Activated CD4-positive, alpha-beta T cell treated with anti-CD3 and anti-CD28 coated beads, Interleukin-2, amount 10 ng/mL, durations not matched to agents 24 days and 14 days (primary cell): ENCODE measurements at regions of chr13 and their contacts with region 1.

Region 1: DNA sequence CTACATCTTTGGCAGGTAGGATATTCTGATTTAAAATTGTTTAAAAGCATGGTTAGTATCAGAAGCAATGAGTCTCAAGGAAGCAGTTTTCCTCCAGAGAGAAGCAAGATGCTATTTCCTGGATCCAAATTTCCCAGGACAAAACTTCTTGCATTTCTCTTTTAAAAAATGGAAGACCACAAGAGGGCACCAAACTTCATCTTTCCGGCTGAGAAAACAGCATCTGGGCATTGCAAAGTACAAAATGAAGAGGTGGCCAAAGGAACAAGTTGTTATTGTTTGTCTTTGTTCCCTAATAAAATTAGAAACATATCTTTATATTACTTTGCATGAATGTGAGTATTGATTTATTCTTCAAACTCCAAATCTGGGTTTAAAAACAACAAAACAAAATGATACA is 60.0 kb upstream of the LRCH1 start:
- DNase-seq: peak; percentile 71
- H3K4me3 Mint-ChIP-seq: no peak overlapping the region
- H3K27ac Mint-ChIP-seq: no peak overlapping the region
- H3K4me1 Mint-ChIP-seq: peaks cover 3% of the 10 kb centered on the region
- H3K27me3 Mint-ChIP-seq: no peaks in the 10 kb centered on the region

Region 2: DNA sequence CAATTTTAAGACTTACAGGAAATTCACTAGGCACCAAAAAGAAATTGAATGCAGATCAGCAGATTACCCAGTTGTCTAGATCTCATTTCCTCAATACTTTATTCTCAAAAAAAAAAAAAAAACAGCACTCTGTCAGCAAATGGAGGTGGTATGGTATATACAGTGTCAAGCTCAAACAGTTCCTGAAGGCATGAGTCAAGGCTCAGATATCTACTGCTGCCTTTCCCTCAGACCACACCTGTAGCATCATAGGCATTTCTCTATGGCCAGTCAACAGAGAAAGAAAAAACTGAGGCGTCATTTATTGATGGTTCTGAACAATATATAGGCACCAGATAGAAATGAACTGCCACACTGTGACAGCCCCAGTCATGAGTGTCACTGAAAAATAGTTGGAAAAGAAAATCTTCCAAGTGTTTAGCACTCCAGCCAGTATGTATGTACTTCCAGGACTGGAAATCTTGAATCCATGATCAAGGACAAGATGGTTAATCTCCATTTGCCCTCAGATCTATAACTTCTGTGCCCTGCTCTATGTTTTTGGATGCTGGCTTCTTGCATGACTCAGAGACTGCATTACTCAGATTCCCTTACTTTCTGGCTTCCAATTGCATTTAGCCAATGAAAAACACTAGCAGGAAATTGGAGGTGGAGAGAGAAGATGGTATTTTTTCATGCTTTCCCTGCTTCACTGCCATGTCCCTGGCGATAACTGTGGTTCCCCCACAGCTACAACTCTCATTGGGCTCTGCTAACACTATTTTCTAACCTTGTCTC is 1036.6 kb before region 1 on chr13:
- intact Hi-C with region 1: no loop called
- DNase-seq: no peak
- H3K4me3 Mint-ChIP-seq: no peak overlapping the region
- H3K27ac Mint-ChIP-seq: no peak overlapping the region
- H3K4me1 Mint-ChIP-seq: peaks cover under 1% of the 10 kb centered on the region
- H3K27me3 Mint-ChIP-seq: peaks cover under 1% of the 10 kb centered on the region

Region 3: GRCh38 chr13:46530084-46530935 is 37.4 kb after region 1 on chr13:
- intact Hi-C with region 1: loop called (anchors 5 kb)
- DNase-seq: no peak
- H3K4me3 Mint-ChIP-seq: no peak overlapping the region
- H3K27ac Mint-ChIP-seq: peak overlapping the region; percentile 68
- H3K4me1 Mint-ChIP-seq: peaks cover 22% of the 10 kb centered on the region
- H3K27me3 Mint-ChIP-seq: peaks cover 6% of the 10 kb centered on the region

Region 4: GRCh38 chr13:46721054-46721453 is 228.1 kb after region 1 on chr13:
- intact Hi-C with region 1: loop called (anchors 1 kb)
- DNase-seq: peak; percentile 81
- H3K4me3 Mint-ChIP-seq: no peak overlapping the region
- H3K27ac Mint-ChIP-seq: no peak overlapping the region
- H3K4me1 Mint-ChIP-seq: peaks cover 7% of the 10 kb centered on the region
- H3K27me3 Mint-ChIP-seq: no peaks in the 10 kb centered on the region